Activated CD4-positive, alpha-beta T cell treated with anti-CD3 and anti-CD28 coated beads for 36 hours (primary cell): ENCODE measurements at regions of chr16 and their contacts with region 1.

Region 1: GRCh38 chr16:46973207-46973995 is at the start of gene DNAJA2:
- DNase-seq: peak; percentile 96
- ATAC-seq: peak; percentile 87
- H3K4me3 Mint-ChIP-seq: peak within 1 kb of the TSS; percentile 85
- H3K27ac Mint-ChIP-seq: peak within 1 kb of the TSS; percentile 99
- H3K4me1 Mint-ChIP-seq: peaks cover 56% of the 10 kb centered on the region
- H3K27me3 Mint-ChIP-seq: no peaks in the 10 kb centered on the region
- total RNA-seq, gene DNAJA2: 57.2 to 71.2 TPM

Region 2: DNA sequence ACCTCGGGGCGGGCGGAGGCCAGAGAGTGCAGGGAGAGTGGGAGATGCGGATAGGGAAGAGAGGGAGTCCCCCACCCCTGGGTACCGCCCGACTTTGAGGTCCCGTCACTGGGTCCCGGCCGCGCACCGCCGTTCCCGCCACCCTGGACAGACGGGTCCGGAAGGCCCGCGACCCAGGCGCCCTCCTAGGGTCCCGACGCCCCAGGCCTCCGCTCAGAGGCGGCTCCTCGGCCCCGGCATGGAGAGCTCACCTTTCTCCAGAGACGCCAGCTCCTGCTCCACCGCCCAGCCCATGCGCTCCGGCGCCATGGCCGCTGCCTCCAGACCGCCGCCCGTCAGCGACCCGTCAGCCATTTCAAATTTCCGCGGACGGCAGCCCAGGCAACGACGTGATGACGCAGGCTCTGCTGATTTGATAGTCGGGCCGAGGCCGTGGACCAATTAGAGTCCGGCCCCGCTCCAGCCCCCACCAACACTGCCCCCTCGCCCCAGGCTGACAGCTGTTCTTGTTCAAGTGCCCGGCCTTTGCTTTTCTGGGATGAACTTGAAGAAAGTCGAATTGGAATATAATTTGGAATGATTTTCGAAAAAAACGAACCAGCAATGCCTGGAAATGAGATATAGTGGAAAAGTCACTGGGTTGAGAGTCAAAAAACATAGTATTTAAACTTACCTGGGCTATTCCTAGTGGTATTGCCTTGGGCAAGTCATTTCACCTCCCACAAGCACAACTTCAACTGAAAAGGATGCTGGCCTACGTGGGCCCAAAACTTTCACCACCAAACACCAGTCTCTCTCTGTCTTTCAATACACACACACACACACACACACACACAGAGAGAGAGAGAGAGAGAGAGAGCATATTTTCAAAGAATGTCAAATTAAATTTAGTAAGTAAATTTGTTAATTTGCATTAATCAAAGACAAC is 352.1 kb before region 1 on chr16 and contains the start of gene SHCBP1:
- CTCF ChIA-PET with region 1: no interaction called
- POLR2A ChIA-PET with region 1: no interaction called
- intact Hi-C with region 1: loop called in 1 of 2 experiments (anchors 1 kb)
- DNase-seq: peak; percentile 92
- ATAC-seq: peak; percentile 96
- H3K4me3 Mint-ChIP-seq: peak within 1 kb of the TSS; percentile 96
- H3K27ac Mint-ChIP-seq: peak within 1 kb of the TSS; percentile 86
- H3K4me1 Mint-ChIP-seq: peaks cover 16% of the 10 kb centered on the region
- H3K27me3 Mint-ChIP-seq: peaks cover 2% of the 10 kb centered on the region
- total RNA-seq, gene SHCBP1: 29.1 to 47.4 TPM

Region 3: GRCh38 chr16:46830902-46831647 is 142.3 kb before region 1 on chr16 and contains the start of gene C16orf87:
- CTCF ChIA-PET with region 1: no interaction called
- POLR2A ChIA-PET with region 1: no interaction called
- intact Hi-C with region 1: loop called (anchors 1 to 2 kb)
- DNase-seq: peak; percentile 95
- ATAC-seq: peak; percentile 96
- H3K4me3 Mint-ChIP-seq: peak within 1 kb of the TSS; percentile 93
- H3K27ac Mint-ChIP-seq: peak within 1 kb of the TSS; percentile 98
- H3K4me1 Mint-ChIP-seq: peaks cover 36% of the 10 kb centered on the region
- H3K27me3 Mint-ChIP-seq: no peaks in the 10 kb centered on the region
- total RNA-seq, gene C16orf87: 14.6 to 17.2 TPM

Region 4: GRCh38 chr16:46961373-46962353 is 11.7 kb before region 1 on chr16:
- CTCF ChIA-PET with region 1: interaction called, 13 read pairs
- POLR2A ChIA-PET with region 1: no interaction called
- intact Hi-C with region 1: no loop called
- DNase-seq: peak; percentile 66
- ATAC-seq: peak; percentile 97
- H3K4me3 Mint-ChIP-seq: peak overlapping the region; percentile 11
- H3K27ac Mint-ChIP-seq: peak overlapping the region; percentile 88
- H3K4me1 Mint-ChIP-seq: peaks cover 40% of the 10 kb centered on the region
- H3K27me3 Mint-ChIP-seq: no peaks in the 10 kb centered on the region

Region 5: GRCh38 chr16:47110939-47111338 is 137.5 kb after region 1 on chr16:
- CTCF ChIA-PET with region 1: interaction called, 4 read pairs
- POLR2A ChIA-PET with region 1: no interaction called
- intact Hi-C with region 1: loop called in 1 of 2 experiments (anchors 2 kb)
- DNase-seq: no peak
- ATAC-seq: no peak
- H3K4me3 Mint-ChIP-seq: no peak overlapping the region
- H3K27ac Mint-ChIP-seq: no peak overlapping the region
- H3K4me1 Mint-ChIP-seq: peaks cover 23% of the 10 kb centered on the region
- H3K27me3 Mint-ChIP-seq: peaks cover 3% of the 10 kb centered on the region

Region 6: DNA sequence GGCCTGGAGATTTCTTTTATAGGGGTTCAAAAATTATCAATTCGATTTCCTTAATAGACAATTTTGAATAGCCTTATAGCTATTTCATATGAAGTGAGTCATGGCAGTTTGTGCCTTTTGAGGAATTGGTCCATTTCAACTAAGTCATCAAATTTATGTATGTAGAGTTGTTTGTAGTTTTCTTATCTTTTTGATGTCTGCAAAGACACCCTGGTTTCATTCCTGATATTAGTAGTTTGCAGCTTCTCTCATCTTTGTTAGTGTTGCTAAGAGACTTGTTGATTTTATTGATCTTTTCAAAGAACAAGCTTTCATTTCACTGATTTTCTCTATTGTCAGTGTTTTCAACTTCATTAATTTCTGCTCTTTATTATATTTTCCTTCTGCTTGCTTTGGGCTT is 1592.4 kb after region 1 on chr16:
- CTCF ChIA-PET with region 1: no interaction called
- POLR2A ChIA-PET with region 1: no interaction called
- intact Hi-C with region 1: loop called in 1 of 2 experiments (anchors 5 kb)
- DNase-seq: no peak
- ATAC-seq: peak; percentile 83
- H3K4me3 Mint-ChIP-seq: no peak overlapping the region
- H3K27ac Mint-ChIP-seq: no peak overlapping the region
- H3K4me1 Mint-ChIP-seq: peaks cover 69% of the 10 kb centered on the region
- H3K27me3 Mint-ChIP-seq: no peaks in the 10 kb centered on the region